ENCODE measurements at regions of chr4 and their contacts with region 1.

Region 1: GRCh38 chr4:38132107-38132673 is 172.0 kb downstream of the PTTG2 start:
- DNase-seq: peak; percentile 93
- H3K4me3 Mint-ChIP-seq: peak overlapping the region; percentile 76
- H3K27ac Mint-ChIP-seq: peak overlapping the region; percentile 87
- H3K4me1 Mint-ChIP-seq: peaks cover 52% of the 10 kb centered on the region
- H3K27me3 Mint-ChIP-seq: peaks cover 2% of the 10 kb centered on the region

Region 2: DNA sequence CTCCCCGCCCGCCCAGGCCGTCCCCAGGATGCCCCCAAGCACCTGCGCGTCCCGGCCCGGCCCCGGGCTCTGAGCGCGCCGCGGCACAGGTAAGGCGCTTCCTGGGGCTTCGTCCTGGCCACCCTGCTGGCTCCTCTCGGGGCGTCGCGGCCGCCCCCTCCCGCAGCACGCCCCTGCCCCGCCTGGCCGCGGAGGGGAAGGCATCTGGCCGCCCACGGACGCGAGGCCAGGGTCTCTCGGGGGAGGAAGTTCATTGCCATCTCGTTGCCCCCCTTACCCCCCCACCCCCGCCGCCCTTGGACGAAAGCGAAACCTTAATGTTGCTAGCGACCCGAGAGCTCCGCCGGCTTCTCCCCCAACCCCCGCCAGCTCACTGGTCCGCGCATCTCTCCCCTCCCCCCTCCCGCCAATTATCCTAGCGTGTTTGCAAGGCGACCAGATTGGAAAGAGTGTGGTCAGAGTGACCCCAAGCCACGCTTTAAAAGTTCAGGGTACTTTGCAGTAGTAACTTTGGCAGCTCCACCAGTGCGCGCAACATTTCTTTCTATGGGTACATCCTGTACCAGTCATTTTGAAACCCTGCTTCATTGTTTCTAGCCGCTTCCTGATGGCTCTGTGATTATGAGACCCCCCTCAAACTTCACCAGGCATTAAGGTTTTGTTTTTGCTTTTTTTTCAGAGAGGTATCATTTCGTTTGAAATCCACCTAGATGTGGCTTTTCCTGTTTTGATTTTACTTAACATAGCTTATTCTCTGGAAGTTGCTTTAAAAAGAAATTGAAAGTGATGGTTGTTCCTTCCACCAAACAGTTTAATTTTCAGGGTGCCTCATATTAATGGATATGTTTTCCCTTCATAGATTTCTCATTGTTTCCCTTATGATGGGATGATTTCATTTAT is 240.7 kb before region 1 on chr4:
- intact Hi-C with region 1: loop called (anchors 2 kb)
- DNase-seq: peak; percentile 90
- H3K4me3 Mint-ChIP-seq: peak overlapping the region; percentile 90
- H3K27ac Mint-ChIP-seq: peak overlapping the region; percentile 95
- H3K4me1 Mint-ChIP-seq: peaks cover 42% of the 10 kb centered on the region
- H3K27me3 Mint-ChIP-seq: peaks cover 2% of the 10 kb centered on the region

Region 3: DNA sequence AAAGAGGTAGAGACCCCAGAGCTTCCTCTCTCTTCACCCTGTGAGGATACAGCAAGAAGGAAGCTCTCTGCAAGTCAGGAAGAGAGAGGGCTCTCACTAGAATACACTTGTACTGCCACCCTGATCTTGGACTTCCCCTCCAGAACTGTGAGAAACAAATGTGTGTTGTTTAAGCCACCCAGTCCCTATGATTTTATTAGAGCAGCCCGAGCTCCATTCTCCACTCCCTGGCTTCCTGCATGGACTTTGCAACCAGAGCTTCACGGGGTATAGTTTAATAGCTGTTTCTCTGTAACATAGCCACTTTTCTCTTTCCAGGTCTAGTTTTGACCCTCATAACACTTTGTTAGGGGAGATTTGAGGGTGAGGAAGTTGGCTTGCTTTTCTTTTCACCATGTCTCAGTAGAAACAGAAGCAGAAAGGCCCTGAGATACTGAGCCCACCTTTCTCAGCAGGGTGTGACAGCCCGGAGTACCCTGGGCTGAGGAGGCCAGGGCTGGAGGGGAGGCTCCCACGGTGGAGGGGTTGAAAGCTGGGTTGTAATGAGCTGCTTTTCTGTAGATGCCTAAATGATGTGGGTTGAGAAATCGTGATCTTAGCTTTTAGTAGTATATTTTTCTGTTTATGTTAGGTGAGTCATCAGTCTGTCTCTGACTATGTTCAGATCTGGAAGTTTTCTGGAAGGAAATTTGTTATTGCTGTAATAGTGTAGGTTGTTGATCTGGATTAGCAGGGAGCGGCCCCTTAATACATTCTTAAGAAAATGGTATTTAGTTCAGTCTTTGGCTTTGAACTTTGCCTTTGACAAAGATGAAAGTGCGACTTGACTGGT is 53.4 kb before region 1 on chr4:
- intact Hi-C with region 1: loop called (anchors 1 kb)
- DNase-seq: no peak
- H3K4me3 Mint-ChIP-seq: no peak overlapping the region
- H3K27ac Mint-ChIP-seq: peak overlapping the region; percentile 61
- H3K4me1 Mint-ChIP-seq: peaks cover 17% of the 10 kb centered on the region
- H3K27me3 Mint-ChIP-seq: no peaks in the 10 kb centered on the region

Region 4: GRCh38 chr4:38179690-38180377 is 47.6 kb after region 1 on chr4:
- intact Hi-C with region 1: loop called (anchors 1 kb)
- DNase-seq: peak; percentile 92
- H3K4me3 Mint-ChIP-seq: no peak overlapping the region
- H3K27ac Mint-ChIP-seq: no peak overlapping the region
- H3K4me1 Mint-ChIP-seq: peaks cover 30% of the 10 kb centered on the region
- H3K27me3 Mint-ChIP-seq: peaks cover 17% of the 10 kb centered on the region

Region 5: GRCh38 chr4:38663801-38664705 is 531.9 kb after region 1 on chr4 and contains the start of gene KLF3:
- intact Hi-C with region 1: loop called (anchors 2 kb)
- DNase-seq: peak; percentile 96
- H3K4me3 Mint-ChIP-seq: peak within 1 kb of the TSS; percentile 76
- H3K27ac Mint-ChIP-seq: peak within 1 kb of the TSS; percentile 65
- H3K4me1 Mint-ChIP-seq: peaks cover 40% of the 10 kb centered on the region
- H3K27me3 Mint-ChIP-seq: peaks cover 47% of the 10 kb centered on the region
- total RNA-seq, gene KLF3: 0.83 and 1.0 TPM in 2 replicates

Region 6: GRCh38 chr4:39032218-39033085 is 900.3 kb after region 1 on chr4 and contains the start of gene TMEM156:
- intact Hi-C with region 1: loop called (anchors 10 kb)
- DNase-seq: peak; percentile 81
- H3K4me3 Mint-ChIP-seq: peak within 1 kb of the TSS; percentile 88
- H3K27ac Mint-ChIP-seq: peak within 1 kb of the TSS; percentile 89
- H3K4me1 Mint-ChIP-seq: peaks cover 37% of the 10 kb centered on the region
- H3K27me3 Mint-ChIP-seq: no peaks in the 10 kb centered on the region
- total RNA-seq, gene TMEM156: 25.9 and 26.9 TPM in 2 replicates

Measured in activated CD4-positive, alpha-beta T cell treated with anti-CD3 and anti-CD28 coated beads, Interleukin-2, amount 10 ng/mL, durations not matched to agents 24 days and 14 days (primary cell).